ENCODE measurements at regions of chr3 and their contacts with region 1.

Region 1: GRCh38 chr3:44992555-44993470 is 16.8 kb downstream of the EXOSC7 start:
- DNase-seq: peak; percentile 31
- H3K4me3 Mint-ChIP-seq: no peak overlapping the region
- H3K27ac Mint-ChIP-seq: no peak overlapping the region
- H3K4me1 Mint-ChIP-seq: peaks cover 25% of the 10 kb centered on the region
- H3K27me3 Mint-ChIP-seq: no peaks in the 10 kb centered on the region

Region 2: DNA sequence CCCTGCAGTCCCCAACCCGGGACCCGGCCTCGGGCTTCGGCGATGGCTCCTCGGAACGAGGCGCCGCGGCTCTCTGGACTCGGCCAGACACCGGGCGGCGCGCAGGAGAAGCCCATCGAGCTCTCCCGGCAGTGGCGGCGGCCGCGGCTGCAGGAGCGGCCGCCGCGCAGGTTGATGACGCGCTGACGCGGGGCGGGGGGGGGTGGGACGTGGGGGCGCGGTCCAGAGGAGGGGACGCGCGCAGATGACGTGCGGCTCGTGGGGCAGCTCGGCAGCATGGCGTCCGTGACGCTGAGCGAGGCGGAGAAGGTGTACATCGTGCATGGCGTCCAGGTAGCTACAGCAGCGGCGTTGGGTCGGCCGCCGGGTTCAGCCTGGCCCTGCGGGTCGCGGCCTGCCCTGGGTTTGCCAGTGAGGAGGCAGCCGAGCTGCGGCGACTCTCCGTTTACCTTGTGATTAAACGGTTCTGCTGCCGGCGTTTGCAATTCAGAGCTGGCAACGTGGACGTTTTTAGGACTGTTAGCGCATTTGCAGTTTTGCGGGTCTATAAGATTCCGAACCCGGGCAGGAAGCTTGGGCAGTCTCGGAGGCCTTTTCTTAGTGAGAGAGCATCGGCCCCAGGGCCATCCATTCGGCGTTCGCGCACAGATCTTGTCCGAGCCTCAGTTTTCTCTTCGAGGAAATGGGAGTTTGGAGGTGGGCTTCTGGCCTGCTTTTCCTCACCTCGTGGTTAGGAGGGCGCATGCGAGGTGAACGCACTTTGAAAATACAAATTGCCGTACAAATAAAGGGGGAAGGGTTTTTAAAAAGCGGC is 16.6 kb before region 1 on chr3 and contains the starts of genes EXOSC7 and ZDHHC3:
- CTCF ChIA-PET with region 1: interaction called, 14 read pairs
- POLR2A ChIA-PET with region 1: interaction called, 20 read pairs
- DNase-seq: peak; percentile 89
- H3K4me3 Mint-ChIP-seq: peak within 1 kb of the TSS; percentile 88
- H3K27ac Mint-ChIP-seq: peak within 1 kb of the TSS; percentile 83
- H3K4me1 Mint-ChIP-seq: peaks cover 59% of the 10 kb centered on the region
- H3K27me3 Mint-ChIP-seq: no peaks in the 10 kb centered on the region
- total RNA-seq, gene EXOSC7: 38.0 to 40.8 TPM
- total RNA-seq, gene ZDHHC3: 46.6 to 51.6 TPM

Region 3: GRCh38 chr3:45003859-45004258 is 11.0 kb after region 1 on chr3:
- CTCF ChIA-PET with region 1: interaction called, 16 read pairs
- POLR2A ChIA-PET with region 1: interaction called, 7 read pairs
- DNase-seq: no peak
- H3K4me3 Mint-ChIP-seq: no peak overlapping the region
- H3K27ac Mint-ChIP-seq: no peak overlapping the region
- H3K4me1 Mint-ChIP-seq: peaks cover 39% of the 10 kb centered on the region
- H3K27me3 Mint-ChIP-seq: no peaks in the 10 kb centered on the region

Measured in activated CD4-positive, alpha-beta memory T cell treated with anti-CD3 and anti-CD28 coated beads, Interleukin-2, amount 10 ng/mL, durations not matched to agents 7 days and 5 days (primary cell).